Naive thymus-derived CD4-positive, alpha-beta T cell (primary cell): ENCODE measurements at regions of chr6 and their contacts with region 1.

Region 1: GRCh38 chr6:31271641-31272357 is at the start of gene HLA-C:
- DNase-seq: peak; percentile 78 to 96 (median 92)
- ATAC-seq: peak; percentile 90
- H3K4me3 ChIP-seq: peak within 1 kb of the TSS; percentile 83
- H3K4me3 Mint-ChIP-seq: peak within 1 kb of the TSS; percentile 89 to 100 (median 94)
- H3K27ac ChIP-seq: peak within 1 kb of the TSS; percentile 99
- H3K27ac Mint-ChIP-seq: peak within 1 kb of the TSS; percentile 99 to 100 (median 100)
- H3K4me1 ChIP-seq: peaks cover 25 to 41% of the 10 kb centered on the region in 2 donors
- H3K4me1 Mint-ChIP-seq: peaks cover 53 to 69% (median 62%) of the 10 kb centered on the region in 7 donors
- H3K27me3 ChIP-seq: no peaks in the 10 kb centered on the region
- H3K27me3 Mint-ChIP-seq: peaks cover 0 to 19% (median 0%) of the 10 kb centered on the region in 5 donors
- total RNA-seq, gene HLA-C: 1,349 to 2,513 (median 1,489) TPM

Region 2: DNA sequence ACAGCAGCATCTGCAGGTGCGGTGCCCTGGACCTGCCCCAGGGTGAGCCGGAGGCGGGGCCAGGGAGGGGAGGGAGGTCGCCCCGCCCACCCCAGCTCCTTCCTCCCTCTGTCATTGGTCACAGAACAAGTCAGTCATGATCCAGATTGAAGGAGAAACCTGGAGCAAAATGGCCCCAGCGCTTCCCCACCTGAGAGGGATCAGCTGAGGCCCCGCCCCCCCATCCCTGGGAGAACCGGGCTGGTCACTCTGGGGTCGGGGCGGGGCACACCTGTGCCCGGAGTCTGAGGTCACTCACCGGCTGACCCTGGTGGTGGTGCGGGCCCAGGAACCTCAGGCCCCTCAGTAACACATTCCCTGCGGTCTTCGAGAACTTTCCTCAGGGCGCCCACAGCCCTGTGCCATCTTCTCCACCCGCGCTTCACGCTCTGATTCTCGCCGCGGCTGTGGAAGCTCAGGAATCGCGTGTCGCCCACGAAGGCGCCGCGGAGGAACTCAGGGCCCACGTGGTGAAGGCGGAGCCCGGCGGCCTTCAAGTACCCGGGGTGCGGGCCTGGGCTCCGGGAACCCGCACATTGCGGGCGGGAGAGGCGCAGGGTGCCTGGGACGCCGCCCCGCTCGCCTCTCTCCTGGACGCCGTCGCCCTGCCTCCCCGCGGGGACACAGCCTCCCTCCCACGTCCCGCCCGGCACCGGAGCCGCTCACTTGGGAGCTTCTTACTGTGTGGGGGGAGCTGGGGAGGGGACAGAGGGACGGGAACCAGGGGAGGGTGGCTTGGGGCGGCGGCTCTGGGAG is 36.4 kb after region 1 on chr6:
- CTCF ChIA-PET with region 1: no interaction called
- POLR2A ChIA-PET with region 1: interaction called, 13 read pairs
- intact Hi-C with region 1: loop called in 1 of 2 experiments (anchors 1 kb)
- DNase-seq: peak; percentile 24 to 84 (median 68)
- ATAC-seq: peak; percentile 96
- H3K4me3 ChIP-seq: peak overlapping the region; percentile 71
- H3K4me3 Mint-ChIP-seq: peak overlapping the region; percentile 72 to 93 (median 88)
- H3K27ac ChIP-seq: peak overlapping the region; percentile 61
- H3K27ac Mint-ChIP-seq: peak overlapping the region in 7 of 9 donors; percentile 65 to 93 (median 82)
- H3K4me1 ChIP-seq: peaks cover 0 to 5% of the 10 kb centered on the region in 2 donors
- H3K4me1 Mint-ChIP-seq: peaks cover 0 to 13% (median 0%) of the 10 kb centered on the region in 7 donors
- H3K27me3 ChIP-seq: peaks cover 0 to 3% of the 10 kb centered on the region in 2 donors
- H3K27me3 Mint-ChIP-seq: peaks cover 0 to 50% (median 0%) of the 10 kb centered on the region in 5 donors

Region 3: DNA sequence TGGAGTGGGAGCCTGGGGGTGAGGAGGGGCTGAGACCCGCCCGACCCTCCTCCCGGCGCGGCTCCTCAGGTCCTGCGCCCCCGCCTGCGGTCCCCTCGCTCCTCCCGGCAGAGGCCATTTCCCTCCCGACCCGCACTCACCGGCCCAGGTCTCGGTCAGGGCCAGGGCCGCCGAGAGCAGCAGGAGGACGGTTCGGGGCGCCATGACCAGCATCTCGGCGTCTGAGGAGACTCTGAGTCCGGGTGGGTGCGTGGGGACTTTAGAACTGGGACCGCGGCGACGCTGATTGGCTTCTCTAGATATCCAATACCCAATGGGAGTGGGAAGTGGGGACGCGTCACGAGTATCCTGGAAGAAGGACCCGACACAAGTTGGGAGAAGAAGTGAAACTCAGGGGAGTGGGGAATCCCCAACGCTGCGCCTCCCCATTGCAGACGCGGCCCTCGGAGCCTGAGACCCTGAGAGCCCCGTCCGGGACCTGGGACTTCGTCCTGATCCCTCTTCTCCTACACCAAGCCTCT is 85.2 kb after region 1 on chr6 and contains the start of gene HLA-B:
- CTCF ChIA-PET with region 1: no interaction called
- POLR2A ChIA-PET with region 1: interaction called, 31 read pairs
- intact Hi-C with region 1: loop called (anchors 1 kb)
- DNase-seq: peak; percentile 65 to 91 (median 82)
- ATAC-seq: peak; percentile 90
- H3K4me3 ChIP-seq: peak within 1 kb of the TSS; percentile 68
- H3K4me3 Mint-ChIP-seq: peak within 1 kb of the TSS; percentile 80 to 100 (median 98)
- H3K27ac ChIP-seq: peak within 1 kb of the TSS; percentile 100
- H3K27ac Mint-ChIP-seq: peak within 1 kb of the TSS; percentile 99 to 100 (median 100)
- H3K4me1 ChIP-seq: peaks cover 28 to 33% of the 10 kb centered on the region in 2 donors
- H3K4me1 Mint-ChIP-seq: peaks cover 49 to 66% (median 58%) of the 10 kb centered on the region in 7 donors
- H3K27me3 ChIP-seq: no peaks in the 10 kb centered on the region
- H3K27me3 Mint-ChIP-seq: peaks cover 0 to 19% (median 0%) of the 10 kb centered on the region in 5 donors
- total RNA-seq, gene HLA-B: 5,136 to 7,364 (median 5,516) TPM

Region 4: GRCh38 chr6:31462964-31463870 is 191.4 kb after region 1 on chr6:
- CTCF ChIA-PET with region 1: no interaction called
- POLR2A ChIA-PET with region 1: interaction called, 3 read pairs
- intact Hi-C with region 1: loop called in 1 of 2 experiments (anchors 10 kb)
- DNase-seq: peak; percentile 77 to 92 (median 90)
- ATAC-seq: peak; percentile 95
- H3K4me3 ChIP-seq: peak overlapping the region; percentile 90
- H3K4me3 Mint-ChIP-seq: peak overlapping the region; percentile 96 to 100 (median 100)
- H3K27ac ChIP-seq: peak overlapping the region; percentile 99
- H3K27ac Mint-ChIP-seq: peak overlapping the region; percentile 96 to 99 (median 99)
- H3K4me1 ChIP-seq: peaks cover 34 to 37% of the 10 kb centered on the region in 2 donors
- H3K4me1 Mint-ChIP-seq: peaks cover 41 to 70% (median 61%) of the 10 kb centered on the region in 7 donors
- H3K27me3 ChIP-seq: no peaks in the 10 kb centered on the region
- H3K27me3 Mint-ChIP-seq: peaks cover 0 to 9% (median 0%) of the 10 kb centered on the region in 5 donors